Activated naive CD4-positive, alpha-beta T cell treated with anti-CD3 and anti-CD28 coated beads, Interleukin-2, amount 10 ng/mL, durations not matched to agents 7 days and 5 days (primary cell): ENCODE measurements at regions of chr20 and their contacts with region 1.

Region 1: DNA sequence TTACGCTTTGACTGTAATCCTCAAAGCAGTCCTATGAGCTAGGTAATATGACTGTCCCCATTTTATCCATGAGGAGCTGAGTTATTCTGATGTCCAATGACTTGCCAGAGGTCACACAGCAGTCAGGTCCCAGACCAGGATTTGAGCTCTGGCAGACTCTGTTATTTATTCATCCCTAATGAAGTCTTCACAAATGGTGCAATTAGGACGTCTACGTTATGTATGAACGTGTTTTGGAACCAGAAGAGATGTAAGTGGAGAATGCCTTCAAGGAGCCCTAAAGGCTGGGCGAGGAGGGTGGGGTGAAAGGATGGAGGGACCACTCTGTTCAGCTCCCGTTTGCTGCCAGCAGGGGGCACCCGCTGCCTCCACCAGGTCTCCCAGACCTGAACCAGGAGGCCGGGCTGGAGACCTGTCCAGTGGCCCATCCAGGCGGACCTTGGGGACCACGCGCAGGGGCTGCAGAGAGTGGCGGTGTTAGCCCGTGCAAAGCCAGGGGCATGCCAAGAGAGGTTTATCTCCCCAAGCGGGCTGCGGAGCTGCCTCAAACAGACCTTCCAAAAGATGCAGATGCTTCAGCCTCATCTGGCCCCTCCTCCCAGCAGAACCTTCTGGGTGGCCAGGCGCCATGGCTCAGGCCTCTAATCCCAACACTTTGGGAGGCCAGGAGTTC is 15.2 kb upstream of the ZNF335 start:
- DNase-seq: peak; percentile 85
- H3K4me3 Mint-ChIP-seq: no peak overlapping the region
- H3K27ac Mint-ChIP-seq: no peak overlapping the region
- H3K4me1 Mint-ChIP-seq: peaks cover 13% of the 10 kb centered on the region
- H3K27me3 Mint-ChIP-seq: peaks cover 69% of the 10 kb centered on the region

Region 2: DNA sequence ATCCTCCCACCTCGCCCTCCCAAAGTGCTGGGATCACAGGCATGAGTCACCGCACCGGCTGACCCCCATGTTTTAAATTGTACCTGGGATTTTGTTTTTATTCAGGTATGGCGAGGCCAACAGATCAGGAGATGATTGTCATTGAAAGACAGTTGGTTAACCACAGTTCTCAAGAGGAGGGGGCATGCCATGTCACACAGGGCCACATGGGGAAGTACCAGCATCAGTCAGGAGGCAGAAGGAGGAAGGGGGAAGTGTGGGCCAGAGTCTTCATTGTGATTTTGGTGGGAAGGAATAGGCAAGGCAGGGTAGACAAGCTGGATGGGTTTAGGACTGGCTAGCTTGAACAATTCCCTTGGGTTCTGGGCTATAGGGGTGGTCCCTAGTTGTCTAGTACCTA is 11.5 kb after region 1 on chr20:
- CTCF ChIA-PET with region 1: interaction called, 57 read pairs
- DNase-seq: peak; percentile 33
- H3K4me3 Mint-ChIP-seq: no peak overlapping the region
- H3K27ac Mint-ChIP-seq: no peak overlapping the region
- H3K4me1 Mint-ChIP-seq: peaks cover 66% of the 10 kb centered on the region
- H3K27me3 Mint-ChIP-seq: peaks cover 45% of the 10 kb centered on the region

Region 3: GRCh38 chr20:46004889-46005473 is 17.7 kb after region 1 on chr20:
- CTCF ChIA-PET with region 1: interaction called, 151 read pairs
- DNase-seq: peak; percentile 67
- H3K4me3 Mint-ChIP-seq: peak overlapping the region; percentile 29
- H3K27ac Mint-ChIP-seq: peak overlapping the region; percentile 30
- H3K4me1 Mint-ChIP-seq: peaks cover 77% of the 10 kb centered on the region
- H3K27me3 Mint-ChIP-seq: peaks cover 69% of the 10 kb centered on the region

Region 4: GRCh38 chr20:46013826-46014516 is 26.7 kb after region 1 on chr20:
- CTCF ChIA-PET with region 1: interaction called, 151 read pairs
- DNase-seq: peak; percentile 75
- H3K4me3 Mint-ChIP-seq: no peak overlapping the region
- H3K27ac Mint-ChIP-seq: no peak overlapping the region
- H3K4me1 Mint-ChIP-seq: peaks cover 54% of the 10 kb centered on the region
- H3K27me3 Mint-ChIP-seq: peaks cover 77% of the 10 kb centered on the region